Endothelial cell of umbilical vein (primary cell): ENCODE measurements at regions of chr16 and their contacts with region 1.

Region 1: DNA sequence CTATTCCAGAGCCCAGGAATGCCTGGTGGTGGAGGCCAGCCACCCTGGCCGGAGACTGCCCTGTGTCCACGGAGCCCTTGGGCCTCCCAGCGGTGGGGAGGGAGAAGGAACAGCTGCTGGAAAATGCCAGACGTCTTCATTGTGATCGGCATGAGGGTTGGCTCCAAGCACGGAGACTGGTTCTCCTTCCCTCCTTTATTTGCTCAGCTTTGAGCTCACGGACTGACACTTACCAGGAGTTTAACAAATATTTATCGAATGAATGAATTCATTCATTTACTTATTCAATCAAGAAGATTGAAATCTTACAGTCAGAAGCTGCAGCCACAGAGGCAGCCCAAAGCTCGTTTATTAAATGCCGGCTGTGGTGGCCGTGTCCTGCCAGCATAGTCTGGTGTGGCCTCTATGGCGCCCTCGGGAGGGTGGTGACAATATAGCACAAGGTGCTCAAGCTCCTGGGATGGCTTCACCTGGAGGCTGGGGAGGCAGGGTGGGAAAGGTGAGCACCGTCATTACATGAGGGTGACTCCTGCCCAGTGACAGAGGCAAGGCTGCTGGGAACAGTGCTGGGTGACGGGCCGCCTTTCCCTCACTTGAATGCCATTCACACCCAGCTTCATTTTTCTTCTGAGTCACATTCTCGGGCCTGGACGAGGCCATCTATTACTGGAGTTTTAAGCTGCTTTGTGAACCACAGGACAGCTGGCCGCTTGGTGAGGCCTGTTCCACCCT is 31.0 kb upstream of the JPH3 start:
- DNase-seq: peak; percentile 51
- H3K4me3 ChIP-seq: no peak overlapping the region
- H3K27ac ChIP-seq: no peak overlapping the region
- H3K4me1 ChIP-seq: no peaks in the 10 kb centered on the region
- H3K27me3 ChIP-seq: no peaks in the 10 kb centered on the region
- CTCF ChIP-seq: peak; percentile 39 to 67
- POLR2A ChIP-seq: no peak

Region 2: GRCh38 chr16:87435372-87436224 is 135.7 kb before region 1 on chr16:
- CTCF ChIA-PET with region 1: interaction called, 16 read pairs
- POLR2A ChIA-PET with region 1: no interaction called
- dilution Hi-C with region 1: no loop called
- intact Hi-C with region 1: no loop called
- DNase-seq: peak; percentile 95
- H3K4me3 ChIP-seq: peak overlapping the region in 2 of 3 experiments; percentile 10
- H3K27ac ChIP-seq: peak overlapping the region; percentile 90
- H3K4me1 ChIP-seq: peaks cover 18% of the 10 kb centered on the region
- H3K27me3 ChIP-seq: no peaks in the 10 kb centered on the region
- CTCF ChIP-seq: no peak
- POLR2A ChIP-seq: no peak

Region 3: GRCh38 chr16:87550496-87550961 is 20.8 kb before region 1 on chr16:
- CTCF ChIA-PET with region 1: interaction called, 11 read pairs
- POLR2A ChIA-PET with region 1: no interaction called
- dilution Hi-C with region 1: no loop called
- intact Hi-C with region 1: no loop called
- DNase-seq: no peak
- H3K4me3 ChIP-seq: no peak overlapping the region
- H3K27ac ChIP-seq: no peak overlapping the region
- H3K4me1 ChIP-seq: no peaks in the 10 kb centered on the region
- H3K27me3 ChIP-seq: peaks cover 0 to 2% of the 10 kb centered on the region in 2 experiments
- CTCF ChIP-seq: peak; percentile 89 to 95
- POLR2A ChIP-seq: no peak

Region 4: DNA sequence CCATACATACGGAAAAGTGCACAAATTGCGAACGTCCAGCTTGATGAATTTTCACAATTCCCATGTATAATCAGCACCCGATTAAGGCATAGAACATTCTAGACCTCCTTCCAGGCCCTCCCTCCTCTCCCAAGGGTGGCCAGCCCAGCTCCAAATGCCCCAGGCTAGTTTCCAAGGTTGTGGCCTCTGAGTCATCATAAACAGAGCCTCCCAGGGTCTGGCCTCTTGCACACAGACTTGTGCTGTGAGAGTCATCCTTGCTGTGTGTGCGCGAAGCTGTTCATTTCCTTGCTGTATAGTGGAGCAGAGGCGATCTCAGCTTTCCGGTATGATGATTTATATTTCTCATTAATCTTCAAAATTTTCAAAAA is 10.5 kb after region 1 on chr16:
- CTCF ChIA-PET with region 1: interaction called, 24 read pairs
- POLR2A ChIA-PET with region 1: no interaction called
- dilution Hi-C with region 1: no loop called
- intact Hi-C with region 1: no loop called
- DNase-seq: peak; percentile 86
- H3K4me3 ChIP-seq: no peak overlapping the region
- H3K27ac ChIP-seq: peak overlapping the region; percentile 73
- H3K4me1 ChIP-seq: peaks cover 27% of the 10 kb centered on the region
- H3K27me3 ChIP-seq: no peaks in the 10 kb centered on the region
- CTCF ChIP-seq: no peak
- POLR2A ChIP-seq: no peak